Gastrocnemius medialis (tissue), 4 donors: ENCODE measurements at regions of chr3 and their contacts with region 1.

Region 1: DNA sequence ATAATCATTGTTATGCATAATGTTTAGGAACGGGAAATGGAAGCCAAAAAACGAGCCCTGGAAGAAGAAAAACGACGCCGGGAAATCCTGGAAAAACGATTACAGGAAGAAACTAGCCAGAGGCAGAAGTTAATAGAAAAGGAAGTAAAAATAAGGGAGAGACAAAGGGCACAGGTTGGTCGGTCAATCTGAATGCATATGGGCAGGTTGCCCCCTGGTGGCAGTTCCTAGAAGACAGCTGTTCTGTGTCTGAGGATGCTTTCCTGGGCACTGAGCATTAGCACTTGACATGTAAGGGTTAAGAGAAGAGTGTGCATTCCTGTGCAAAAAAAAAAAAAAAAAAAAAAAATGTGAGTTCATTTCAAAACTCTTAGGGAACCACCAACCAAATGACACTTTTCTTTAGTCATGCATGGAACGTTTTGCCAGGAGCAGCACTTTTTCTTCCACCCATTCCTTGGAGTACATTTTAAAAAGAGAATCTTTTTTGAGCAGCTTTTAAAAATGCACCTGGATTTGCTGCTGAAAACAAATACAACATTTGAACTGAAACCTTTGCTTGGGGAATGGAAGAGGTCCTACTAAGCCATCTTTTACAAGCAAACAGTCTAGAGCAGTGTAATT is 11.1 kb upstream of the ABHD10 start:
- DNase-seq: peak; percentile 44 to 67
- ATAC-seq: peak; percentile 81 to 85
- H3K4me3 ChIP-seq: peak overlapping the region in 1 of 4 donors; percentile 5
- H3K27ac ChIP-seq: peak overlapping the region in 3 of 4 donors; percentile 2 to 37 (median 2)
- H3K4me1 ChIP-seq: peaks cover 12 to 16% of the 10 kb centered on the region in 2 donors
- H3K27me3 ChIP-seq: no peaks in the 10 kb centered on the region
- CTCF ChIP-seq: peak; percentile 74 to 91 (median 84)
- POLR2A ChIP-seq: no peak

Region 2: DNA sequence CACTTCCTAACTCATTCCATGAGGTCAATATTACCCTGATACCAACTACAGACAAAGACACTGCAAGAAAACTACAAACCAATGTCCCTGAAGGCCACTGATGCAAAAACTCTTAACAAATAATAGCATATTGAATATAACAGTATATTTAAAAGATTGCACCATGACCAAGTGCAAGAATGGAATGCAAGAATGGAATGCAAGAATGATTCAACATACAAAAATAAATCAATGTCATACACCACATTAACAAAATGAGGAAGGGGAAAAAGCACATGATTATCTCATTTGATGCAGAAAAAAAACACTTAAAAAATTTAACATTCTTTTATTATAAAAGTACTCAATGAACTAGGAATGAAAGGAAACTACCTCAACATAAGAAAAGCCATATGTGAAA is 1359.2 kb before region 1 on chr3:
- in situ Hi-C with region 1: no loop called
- intact Hi-C with region 1: no loop called
- DNase-seq: no peak
- ATAC-seq: no peak
- H3K4me3 ChIP-seq: no peak overlapping the region
- H3K27ac ChIP-seq: no peak overlapping the region
- H3K4me1 ChIP-seq: no peaks in the 10 kb centered on the region
- H3K27me3 ChIP-seq: no peaks in the 10 kb centered on the region
- CTCF ChIP-seq: no peak
- POLR2A ChIP-seq: no peak

Region 3: DNA sequence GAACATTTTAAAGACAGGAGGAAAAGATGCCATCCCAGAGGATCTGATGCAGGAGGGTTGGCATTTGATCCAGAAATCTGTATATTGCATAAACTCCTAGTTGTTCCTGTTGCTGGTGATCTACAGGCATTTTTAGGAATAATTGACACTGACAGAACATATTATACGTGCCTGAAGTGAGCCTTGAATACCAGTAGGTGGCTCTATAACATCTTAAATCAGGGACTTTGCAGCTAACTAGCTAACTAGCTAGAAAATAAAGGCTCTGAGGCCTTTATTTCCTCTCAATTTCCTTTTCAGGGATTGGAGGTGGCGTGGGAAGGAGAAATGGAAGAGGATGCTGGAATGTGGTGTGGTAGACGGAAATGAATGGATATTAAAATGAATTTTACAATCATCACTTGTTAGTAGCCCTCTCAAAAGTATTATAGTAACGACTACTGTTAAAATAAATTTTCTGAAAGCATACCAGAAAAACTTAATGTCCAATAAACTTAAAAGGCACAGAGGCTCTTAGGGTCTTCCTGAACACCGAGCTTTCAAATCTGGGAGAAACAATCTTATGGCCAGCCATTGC is 298.8 kb before region 1 on chr3:
- in situ Hi-C with region 1: no loop called
- intact Hi-C with region 1: loop called (anchors 2 kb)
- DNase-seq: no peak
- ATAC-seq: peak; percentile 64 to 74
- H3K4me3 ChIP-seq: no peak overlapping the region
- H3K27ac ChIP-seq: no peak overlapping the region
- H3K4me1 ChIP-seq: peaks cover 5 to 6% of the 10 kb centered on the region in 2 donors
- H3K27me3 ChIP-seq: no peaks in the 10 kb centered on the region
- CTCF ChIP-seq: peak; percentile 46 to 76 (median 69)
- POLR2A ChIP-seq: no peak

Region 4: GRCh38 chr3:111717601-111718000 is 250.2 kb before region 1 on chr3:
- in situ Hi-C with region 1: loop called (anchors 5 kb)
- intact Hi-C with region 1: loop called (anchors 1 kb)
- DNase-seq: peak; percentile 54 to 73
- ATAC-seq: peak; percentile 98 to 99
- H3K4me3 ChIP-seq: no peak overlapping the region
- H3K27ac ChIP-seq: no peak overlapping the region
- H3K4me1 ChIP-seq: peaks cover 0 to 3% of the 10 kb centered on the region in 2 donors
- H3K27me3 ChIP-seq: no peaks in the 10 kb centered on the region
- CTCF ChIP-seq: peak; percentile 89 to 96 (median 92)
- POLR2A ChIP-seq: no peak

Region 5: DNA sequence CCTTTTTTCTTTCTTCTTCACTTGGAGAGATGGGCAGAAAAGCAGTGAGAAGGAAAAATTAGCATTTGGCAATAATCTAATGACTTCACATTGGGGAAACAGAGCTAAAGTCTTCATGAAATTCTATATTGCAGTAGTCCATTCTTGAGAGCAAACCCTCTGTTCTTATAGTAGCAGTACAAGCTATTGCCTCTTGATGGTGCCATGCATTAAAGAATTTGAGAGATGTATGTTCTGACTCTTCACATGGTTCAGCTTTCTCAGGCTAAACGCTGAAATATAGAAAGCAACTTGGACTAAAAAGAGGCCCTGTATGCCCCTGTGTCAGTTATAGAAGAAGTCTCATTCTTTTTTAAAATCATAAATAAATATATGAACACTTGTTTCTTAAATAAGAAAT is 72.7 kb before region 1 on chr3:
- in situ Hi-C with region 1: loop called in 1 of 4 experiments (anchors 10 kb)
- intact Hi-C with region 1: loop called (anchors 1 kb)
- DNase-seq: no peak
- ATAC-seq: peak; percentile 60 to 76
- H3K4me3 ChIP-seq: no peak overlapping the region
- H3K27ac ChIP-seq: no peak overlapping the region
- H3K4me1 ChIP-seq: no peaks in the 10 kb centered on the region
- H3K27me3 ChIP-seq: no peaks in the 10 kb centered on the region
- CTCF ChIP-seq: peak in 4 of 5 experiments; percentile 24 to 53 (median 42)
- POLR2A ChIP-seq: no peak